ENCODE measurements at regions of chr9 and their contacts with region 1.

Region 1: GRCh38 chr9:94554439-94555391 is at the start of gene PCAT7:
- DNase-seq: peak; percentile 78
- ATAC-seq: peak; percentile 94
- H3K4me3 Mint-ChIP-seq: no peak within 1 kb of the TSS
- H3K27ac Mint-ChIP-seq: no peak within 1 kb of the TSS
- H3K4me1 Mint-ChIP-seq: peaks cover 15% of the 10 kb centered on the region
- H3K27me3 Mint-ChIP-seq: peaks cover 3% of the 10 kb centered on the region; the same call in 1 of the 2 replicates
- CTCF ChIP-seq: peak; percentile 41; the same call in 1 of the 2 replicates
- total RNA-seq, gene PCAT7: 6.5 to 7.4 TPM (median 7.4 TPM) in 3 replicates

Region 2: DNA sequence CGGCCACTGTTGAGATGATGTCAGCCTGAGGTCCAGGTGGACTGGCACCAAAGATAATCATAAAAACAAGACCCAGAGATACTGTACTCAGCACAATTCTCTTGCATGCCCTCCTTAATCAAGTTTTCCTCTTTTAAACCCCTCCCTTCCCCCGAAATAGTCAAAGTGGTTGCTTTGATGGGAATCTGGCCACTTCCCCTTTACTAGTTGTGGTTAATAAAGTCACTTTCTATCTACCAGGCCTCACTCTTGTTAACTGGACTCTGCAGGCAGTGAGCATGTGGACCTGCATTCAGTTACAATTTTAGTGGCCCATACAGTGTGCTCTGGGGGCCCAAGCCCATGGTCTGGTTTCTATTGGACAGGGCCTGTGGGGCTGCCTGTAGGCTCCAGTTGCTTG is 21.4 kb after region 1 on chr9:
- CTCF ChIA-PET with region 1: interaction called, 10 read pairs
- POLR2A ChIA-PET with region 1: no interaction called
- DNase-seq: no peak
- ATAC-seq: peak; percentile 18; the same call in 1 of the 2 replicates
- H3K4me3 Mint-ChIP-seq: no peak overlapping the region
- H3K27ac Mint-ChIP-seq: no peak overlapping the region
- H3K4me1 Mint-ChIP-seq: peaks cover 4% of the 10 kb centered on the region; the same call in 1 of the 2 replicates
- H3K27me3 Mint-ChIP-seq: peaks cover 6% of the 10 kb centered on the region
- CTCF ChIP-seq: no peak

Region 3: GRCh38 chr9:94603259-94604160 is 48.8 kb after region 1 on chr9:
- CTCF ChIA-PET with region 1: interaction called, 20 read pairs
- POLR2A ChIA-PET with region 1: no interaction called
- DNase-seq: peak; percentile 93
- ATAC-seq: peak; percentile 94
- H3K4me3 Mint-ChIP-seq: no peak overlapping the region
- H3K27ac Mint-ChIP-seq: peak overlapping the region; percentile 19; the same call in 1 of the 2 replicates
- H3K4me1 Mint-ChIP-seq: peaks cover 23% of the 10 kb centered on the region
- H3K27me3 Mint-ChIP-seq: no peaks in the 10 kb centered on the region
- CTCF ChIP-seq: peak; percentile 64; the same call in 1 of the 2 replicates

Region 4: GRCh38 chr9:94623253-94623652 is 68.5 kb after region 1 on chr9:
- CTCF ChIA-PET with region 1: interaction called, 25 read pairs
- POLR2A ChIA-PET with region 1: interaction called, 5 read pairs
- DNase-seq: peak; percentile 79
- ATAC-seq: peak; percentile 91
- H3K4me3 Mint-ChIP-seq: no peak overlapping the region
- H3K27ac Mint-ChIP-seq: no peak overlapping the region
- H3K4me1 Mint-ChIP-seq: peaks cover 3% of the 10 kb centered on the region; the same call in 1 of the 2 replicates
- H3K27me3 Mint-ChIP-seq: no peaks in the 10 kb centered on the region
- CTCF ChIP-seq: peak; percentile 48; the same call in 1 of the 2 replicates

Region 5: DNA sequence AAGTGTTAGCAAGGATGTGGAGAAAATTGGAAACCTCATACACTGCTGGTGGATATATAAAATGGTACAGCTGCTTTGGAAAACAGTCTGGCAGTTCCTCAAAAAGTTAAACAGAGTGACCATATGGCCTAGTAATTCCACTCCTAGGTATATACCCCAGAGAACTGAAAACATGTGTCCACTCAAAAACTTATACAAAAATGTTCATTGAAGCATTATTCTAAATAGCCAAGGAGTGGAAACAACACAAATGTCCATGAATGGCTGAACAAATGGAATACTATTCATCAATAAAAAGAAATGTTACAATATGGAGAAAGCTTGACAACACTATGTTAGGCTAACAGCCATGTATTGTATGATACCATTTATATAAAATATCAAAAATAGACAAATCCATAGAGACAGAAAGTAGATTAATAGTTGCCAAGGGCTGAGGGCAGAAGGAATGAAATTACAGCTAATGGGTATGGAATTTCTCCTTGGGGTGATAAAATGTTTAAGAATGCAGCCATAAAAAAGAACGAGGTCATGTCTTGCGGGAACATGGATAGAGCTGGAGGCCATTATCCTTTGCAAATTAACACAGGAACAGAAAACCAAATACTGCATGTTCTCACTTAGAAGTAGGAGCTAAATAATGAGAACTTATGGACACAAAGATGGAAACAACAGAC is 118.2 kb after region 1 on chr9:
- CTCF ChIA-PET with region 1: interaction called, 11 read pairs
- POLR2A ChIA-PET with region 1: no interaction called
- DNase-seq: no peak
- ATAC-seq: no peak
- H3K4me3 Mint-ChIP-seq: no peak overlapping the region
- H3K27ac Mint-ChIP-seq: no peak overlapping the region
- H3K4me1 Mint-ChIP-seq: no peaks in the 10 kb centered on the region
- H3K27me3 Mint-ChIP-seq: no peaks in the 10 kb centered on the region
- CTCF ChIP-seq: no peak

Region 6: GRCh38 chr9:94847486-94847885 is 292.8 kb after region 1 on chr9:
- CTCF ChIA-PET with region 1: no interaction called
- POLR2A ChIA-PET with region 1: no interaction called
- DNase-seq: no peak
- ATAC-seq: no peak
- H3K4me3 Mint-ChIP-seq: no peak overlapping the region
- H3K27ac Mint-ChIP-seq: no peak overlapping the region
- H3K4me1 Mint-ChIP-seq: peaks cover 9% of the 10 kb centered on the region
- H3K27me3 Mint-ChIP-seq: no peaks in the 10 kb centered on the region
- CTCF ChIP-seq: no peak